ENCODE measurements at regions of chr21 and their contacts with region 1.

Region 1: GRCh38 chr21:41612674-41613532 is 104.9 kb upstream of the TMPRSS2 start:
- DNase-seq: peak; percentile 93
- H3K4me3 ChIP-seq: no peak overlapping the region
- H3K27ac ChIP-seq: peak overlapping the region; percentile 61
- H3K4me1 ChIP-seq: peaks cover 46% of the 10 kb centered on the region
- H3K27me3 ChIP-seq: no peaks in the 10 kb centered on the region
- CTCF ChIP-seq: peak; percentile 50 to 74

Region 2: DNA sequence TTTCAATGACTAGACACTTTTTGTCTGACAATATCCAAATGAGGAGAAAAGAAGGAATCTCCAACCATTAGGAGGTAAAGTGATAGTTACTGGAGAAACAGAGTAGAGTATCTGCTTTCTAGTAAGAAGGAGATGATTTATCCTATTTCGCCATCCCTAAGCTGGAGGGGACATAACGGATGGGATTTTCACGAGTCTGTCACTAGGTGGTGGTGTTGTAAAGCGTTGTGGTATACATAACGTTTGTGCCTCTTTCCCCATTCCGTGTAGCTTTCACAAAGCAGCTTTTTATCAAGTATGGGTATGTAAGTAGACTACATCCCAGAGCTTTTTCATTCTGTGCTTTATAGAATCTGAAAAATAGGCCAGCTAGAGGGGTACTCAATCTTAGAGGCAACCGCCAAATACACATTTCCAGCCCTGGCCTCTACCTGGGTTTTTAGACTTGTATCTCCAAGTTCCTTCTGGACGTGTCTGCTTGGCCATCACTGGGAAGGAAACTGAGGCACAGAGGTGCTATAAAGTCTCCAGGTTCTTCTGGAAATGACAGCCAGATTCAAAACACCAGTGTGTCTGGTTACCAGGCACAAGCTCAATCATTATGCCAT is 329.6 kb before region 1 on chr21:
- CTCF ChIA-PET with region 1: interaction called, 5 read pairs
- dilution Hi-C with region 1: no loop called
- in situ Hi-C with region 1: no loop called
- intact Hi-C with region 1: loop called (anchors 1 kb)
- DNase-seq: peak; percentile 69
- H3K4me3 ChIP-seq: no peak overlapping the region
- H3K27ac ChIP-seq: no peak overlapping the region
- H3K4me1 ChIP-seq: no peaks in the 10 kb centered on the region
- H3K27me3 ChIP-seq: no peaks in the 10 kb centered on the region
- CTCF ChIP-seq: peak; percentile 82 to 83

Region 3: GRCh38 chr21:41684381-41685245 is 71.7 kb after region 1 on chr21:
- CTCF ChIA-PET with region 1: interaction called, 3 read pairs
- dilution Hi-C with region 1: loop called (anchors 5 kb)
- in situ Hi-C with region 1: loop called in 1 of 2 experiments (anchors 10 kb)
- intact Hi-C with region 1: no loop called
- DNase-seq: peak; percentile 72
- H3K4me3 ChIP-seq: peak overlapping the region in 1 of 3 experiments; percentile 1
- H3K27ac ChIP-seq: peak overlapping the region; percentile 79
- H3K4me1 ChIP-seq: peaks cover 64% of the 10 kb centered on the region
- H3K27me3 ChIP-seq: no peaks in the 10 kb centered on the region
- CTCF ChIP-seq: no peak

Region 4: GRCh38 chr21:41761211-41762181 is 148.6 kb after region 1 on chr21:
- CTCF ChIA-PET with region 1: interaction called, 12 read pairs
- dilution Hi-C with region 1: loop called (anchors 10 kb)
- in situ Hi-C with region 1: loop called in 1 of 2 experiments (anchors 5 kb)
- intact Hi-C with region 1: no loop called
- DNase-seq: peak; percentile 67
- H3K4me3 ChIP-seq: peak overlapping the region; percentile 39 to 53 (median 41)
- H3K27ac ChIP-seq: peak overlapping the region; percentile 86
- H3K4me1 ChIP-seq: peaks cover 69% of the 10 kb centered on the region
- H3K27me3 ChIP-seq: no peaks in the 10 kb centered on the region
- CTCF ChIP-seq: no peak

Region 5: GRCh38 chr21:41816220-41817165 is 203.6 kb after region 1 on chr21:
- CTCF ChIA-PET with region 1: interaction called, 20 read pairs
- dilution Hi-C with region 1: no loop called
- in situ Hi-C with region 1: no loop called
- intact Hi-C with region 1: loop called (anchors 1 kb)
- DNase-seq: peak; percentile 38
- H3K4me3 ChIP-seq: no peak overlapping the region
- H3K27ac ChIP-seq: no peak overlapping the region
- H3K4me1 ChIP-seq: peaks cover 6% of the 10 kb centered on the region
- H3K27me3 ChIP-seq: no peaks in the 10 kb centered on the region
- CTCF ChIP-seq: peak; percentile 60 to 62

Region 6: DNA sequence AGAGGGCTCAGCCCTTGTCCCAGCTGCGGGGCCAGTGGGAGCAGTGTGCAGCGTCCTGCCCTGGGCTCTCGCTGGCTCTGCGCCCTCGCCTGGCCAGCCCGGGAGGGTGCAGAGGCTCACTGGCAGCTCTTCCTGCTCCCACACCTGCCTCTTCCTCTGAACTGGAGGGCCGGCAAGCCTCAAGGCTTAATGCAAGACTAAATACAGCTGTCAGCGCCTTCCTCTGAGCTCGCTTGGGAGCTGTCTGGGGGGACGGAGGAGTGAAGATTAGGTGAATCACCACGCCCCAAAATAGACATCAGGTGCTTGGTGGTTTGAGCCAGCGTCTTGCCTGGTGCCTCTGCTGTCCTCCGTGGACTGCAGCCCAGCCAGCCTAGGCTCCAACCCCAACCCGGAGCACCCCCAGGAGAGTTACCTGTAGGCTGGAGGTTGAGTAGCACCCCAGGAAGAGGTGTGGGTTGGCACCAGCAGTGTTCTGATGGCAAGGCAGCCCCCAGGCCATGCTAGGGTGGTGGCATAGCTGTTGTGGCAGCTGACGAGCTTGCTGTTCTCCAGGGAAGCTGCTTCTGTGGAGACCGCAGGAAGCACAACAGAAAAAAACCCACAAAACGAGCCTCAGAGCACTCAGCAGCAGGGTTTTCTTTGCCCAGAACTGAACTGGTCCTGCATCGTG is 495.1 kb after region 1 on chr21:
- CTCF ChIA-PET with region 1: no interaction called
- dilution Hi-C with region 1: no loop called
- in situ Hi-C with region 1: loop called (anchors 10 to 25 kb)
- intact Hi-C with region 1: no loop called
- DNase-seq: peak; percentile 60
- H3K4me3 ChIP-seq: no peak overlapping the region
- H3K27ac ChIP-seq: no peak overlapping the region
- H3K4me1 ChIP-seq: no peaks in the 10 kb centered on the region
- H3K27me3 ChIP-seq: no peaks in the 10 kb centered on the region
- CTCF ChIP-seq: peak; percentile 89 to 96